PC-3 (cell line): ENCODE measurements at regions of chr12 and their contacts with region 1.

Region 1: GRCh38 chr12:108803428-108804105 is 53.8 kb downstream of the SSH1 start:
- DNase-seq: peak; percentile 96
- ATAC-seq: peak; percentile 97
- H3K4me3 ChIP-seq: no peak overlapping the region
- H3K27ac ChIP-seq: peak overlapping the region; percentile 44
- H3K4me1 ChIP-seq: peaks cover 6% of the 10 kb centered on the region
- H3K27me3 ChIP-seq: no peaks in the 10 kb centered on the region
- CTCF ChIP-seq: peak; percentile 97

Region 2: GRCh38 chr12:108618079-108618952 is 185.3 kb before region 1 on chr12:
- CTCF ChIA-PET with region 1: no interaction called
- POLR2A ChIA-PET with region 1: no interaction called
- intact Hi-C with region 1: loop called (anchors 1 kb)
- DNase-seq: peak; percentile 91
- ATAC-seq: peak; percentile 98
- H3K4me3 ChIP-seq: no peak overlapping the region
- H3K27ac ChIP-seq: no peak overlapping the region
- H3K4me1 ChIP-seq: peaks cover 11% of the 10 kb centered on the region
- H3K27me3 ChIP-seq: no peaks in the 10 kb centered on the region
- CTCF ChIP-seq: peak; percentile 99

Region 3: DNA sequence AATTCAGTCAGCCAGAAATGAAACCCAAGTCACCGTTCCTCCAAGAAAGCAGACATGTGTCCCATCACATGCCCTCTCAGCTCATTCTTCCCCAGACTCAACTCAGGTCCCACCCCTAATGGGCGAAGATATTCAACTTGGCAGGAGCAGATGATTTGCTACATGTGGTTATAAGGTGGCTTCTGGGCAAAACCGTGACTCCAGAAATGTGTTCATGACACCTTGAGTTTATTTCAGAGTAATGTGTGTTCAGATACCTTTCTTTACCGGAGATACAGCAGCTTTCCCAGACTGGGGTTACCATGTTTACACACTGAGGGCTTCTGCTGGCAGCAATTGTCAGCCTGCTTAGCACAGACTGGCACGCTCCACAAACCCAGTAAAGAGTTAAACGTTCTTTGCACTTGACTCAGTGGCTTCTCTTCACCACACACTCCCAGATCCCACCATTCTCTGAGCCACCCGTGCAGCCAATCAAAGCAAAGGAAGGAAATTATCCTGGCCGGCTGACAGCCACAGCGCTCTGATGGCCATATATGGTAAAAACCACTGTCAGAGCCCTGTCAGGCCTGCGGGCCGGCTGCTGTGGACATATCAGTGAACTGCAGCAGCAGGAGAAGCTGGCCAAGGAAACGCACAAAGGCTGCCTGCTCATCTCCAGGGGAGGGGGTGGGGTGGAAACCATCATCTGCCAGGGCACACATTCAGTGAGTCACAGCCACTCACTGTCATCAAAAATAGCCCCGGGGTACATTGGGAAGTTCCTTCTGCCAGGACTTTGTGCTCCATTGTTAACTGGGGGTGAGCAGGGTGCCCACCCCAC is 112.2 kb before region 1 on chr12:
- CTCF ChIA-PET with region 1: interaction called, 13 read pairs
- POLR2A ChIA-PET with region 1: no interaction called
- intact Hi-C with region 1: loop called (anchors 1 kb)
- DNase-seq: peak; percentile 100
- ATAC-seq: peak; percentile 90
- H3K4me3 ChIP-seq: peak overlapping the region; percentile 58
- H3K27ac ChIP-seq: peak overlapping the region; percentile 89
- H3K4me1 ChIP-seq: peaks cover 68% of the 10 kb centered on the region
- H3K27me3 ChIP-seq: no peaks in the 10 kb centered on the region
- CTCF ChIP-seq: 0 out of 2 replicates have a peak, but pooled peaks have one; percentile 14

Region 4: GRCh38 chr12:108731105-108731865 is 72.3 kb before region 1 on chr12 and contains the start of gene CORO1C:
- CTCF ChIA-PET with region 1: interaction called, 3 read pairs
- POLR2A ChIA-PET with region 1: no interaction called
- intact Hi-C with region 1: loop called (anchors 1 kb)
- DNase-seq: peak; percentile 99
- ATAC-seq: peak; percentile 53
- H3K4me3 ChIP-seq: peak within 1 kb of the TSS; percentile 68
- H3K27ac ChIP-seq: peak within 1 kb of the TSS; percentile 87
- H3K4me1 ChIP-seq: peaks cover 57% of the 10 kb centered on the region
- H3K27me3 ChIP-seq: no peaks in the 10 kb centered on the region
- CTCF ChIP-seq: peak; percentile 83
- total RNA-seq, gene CORO1C: 159 and 179 TPM in 2 replicates

Region 5: GRCh38 chr12:108838194-108839017 is 34.8 kb after region 1 on chr12:
- CTCF ChIA-PET with region 1: no interaction called
- POLR2A ChIA-PET with region 1: no interaction called
- intact Hi-C with region 1: no loop called
- DNase-seq: peak; percentile 99
- ATAC-seq: peak; percentile 97
- H3K4me3 ChIP-seq: peak overlapping the region; percentile 23; the same call in 1 of the 2 replicates
- H3K27ac ChIP-seq: peak overlapping the region; percentile 92
- H3K4me1 ChIP-seq: peaks cover 36% of the 10 kb centered on the region
- H3K27me3 ChIP-seq: no peaks in the 10 kb centered on the region
- CTCF ChIP-seq: no peak

Region 6: GRCh38 chr12:108856428-108857157 is 53.0 kb after region 1 on chr12:
- CTCF ChIA-PET with region 1: no interaction called
- POLR2A ChIA-PET with region 1: no interaction called
- intact Hi-C with region 1: loop called (anchors 2 kb)
- DNase-seq: peak; percentile 72
- ATAC-seq: peak; percentile 59
- H3K4me3 ChIP-seq: peak overlapping the region; percentile 82
- H3K27ac ChIP-seq: peak overlapping the region; percentile 88
- H3K4me1 ChIP-seq: peaks cover 29% of the 10 kb centered on the region
- H3K27me3 ChIP-seq: no peaks in the 10 kb centered on the region
- CTCF ChIP-seq: no peak

Region 7: DNA sequence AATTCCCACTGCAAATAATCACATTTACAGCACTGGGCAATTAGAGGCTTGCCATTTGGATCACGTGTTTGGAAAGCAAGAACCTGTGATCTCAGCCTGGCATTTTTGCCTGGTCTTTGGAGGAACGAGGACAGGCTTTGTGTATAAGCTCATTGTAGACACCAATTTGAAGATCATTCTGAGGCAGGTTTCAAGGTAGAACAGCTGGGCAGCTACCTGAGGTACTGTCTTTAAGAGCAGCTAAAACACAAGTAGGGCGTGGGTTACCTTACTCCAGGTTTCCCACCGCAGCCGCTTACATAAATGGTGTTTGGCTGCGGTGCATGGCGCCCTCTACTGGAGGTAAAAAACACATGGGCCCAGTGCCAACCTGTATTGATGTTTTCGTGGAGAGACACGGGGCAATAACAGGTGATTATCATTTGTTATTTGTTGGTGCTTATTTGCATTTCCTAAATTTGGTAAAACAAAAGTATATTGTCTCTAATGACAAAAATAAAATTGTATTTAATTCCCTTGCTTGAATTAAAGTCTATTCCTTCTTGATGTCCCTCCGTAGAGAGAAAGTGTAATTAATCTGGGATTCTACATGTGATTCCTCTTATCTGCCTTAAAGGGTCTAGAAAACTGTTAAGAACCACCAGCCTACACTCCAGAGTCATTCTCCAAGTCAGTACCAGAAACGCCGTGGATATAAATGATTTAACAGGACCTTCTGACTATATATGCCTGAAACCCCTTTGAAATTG is 147.6 kb after region 1 on chr12:
- CTCF ChIA-PET with region 1: no interaction called
- POLR2A ChIA-PET with region 1: no interaction called
- intact Hi-C with region 1: loop called (anchors 1 kb)
- DNase-seq: peak; percentile 91
- ATAC-seq: peak; percentile 77
- H3K4me3 ChIP-seq: peak overlapping the region; percentile 36; the same call in 1 of the 2 replicates
- H3K27ac ChIP-seq: no peak overlapping the region
- H3K4me1 ChIP-seq: no peaks in the 10 kb centered on the region
- H3K27me3 ChIP-seq: peaks cover 16% of the 10 kb centered on the region; the same call in 1 of the 2 replicates
- CTCF ChIP-seq: peak; percentile 97